Activated CD8-positive, alpha-beta T cell treated with anti-CD3 and anti-CD28 coated beads, Interleukin-2, amount 10 ng/mL, durations not matched to agents 7 days and 5 days (primary cell): ENCODE measurements at regions of chr19 and their contacts with region 1.

Region 1: DNA sequence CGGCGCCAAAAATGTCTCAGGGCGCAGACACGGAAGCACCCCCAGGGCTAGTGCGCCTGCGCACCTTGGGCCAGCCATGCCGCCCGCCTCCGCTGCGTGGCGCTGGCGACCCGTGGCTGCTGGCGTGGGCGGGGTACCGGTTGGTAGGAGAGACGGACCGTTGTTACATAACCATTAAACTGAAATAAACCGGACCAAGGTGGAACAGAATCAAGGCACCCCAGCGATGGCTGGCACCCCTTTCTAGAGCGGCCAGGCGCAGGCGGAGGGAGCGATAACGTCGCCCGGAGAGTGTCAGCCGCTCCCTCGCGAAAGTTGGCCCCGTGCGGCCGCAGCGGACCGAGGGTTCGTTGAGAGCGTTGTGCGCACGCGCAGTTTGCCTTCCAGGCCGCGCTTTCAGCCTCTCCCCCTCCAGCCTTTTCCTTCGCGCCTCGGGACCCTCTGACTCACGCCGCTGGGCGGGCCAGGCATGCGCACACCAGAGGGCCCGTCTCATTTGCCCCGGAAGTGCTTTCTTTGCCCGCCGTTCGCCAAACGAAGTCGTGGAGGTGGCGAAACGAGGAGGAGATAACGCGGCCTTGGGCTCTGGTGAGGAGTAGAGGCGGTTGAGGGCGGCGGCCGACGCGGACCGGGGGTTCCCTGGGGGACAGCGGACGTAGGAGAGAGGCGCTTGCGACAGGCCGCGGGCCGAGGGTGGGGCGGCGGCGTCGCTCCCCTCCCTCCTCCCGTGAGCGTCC is at the starts of genes PLEKHJ1 and SF3A2:
- DNase-seq: peak; percentile 98
- ATAC-seq: peak; percentile 87
- H3K4me3 Mint-ChIP-seq: peak within 1 kb of the TSS; percentile 99
- H3K27ac Mint-ChIP-seq: peak within 1 kb of the TSS; percentile 100
- H3K4me1 Mint-ChIP-seq: peaks cover 61% of the 10 kb centered on the region
- H3K27me3 Mint-ChIP-seq: no peaks in the 10 kb centered on the region
- total RNA-seq, gene PLEKHJ1: 78.0 to 79.9 TPM
- total RNA-seq, gene SF3A2: 157 to 163 TPM

Region 2: GRCh38 chr19:2253106-2254053 is 16.9 kb after region 1 on chr19:
- CTCF ChIA-PET with region 1: interaction called, 22 read pairs
- POLR2A ChIA-PET with region 1: interaction called, 19 read pairs
- DNase-seq: peak; percentile 47
- ATAC-seq: no peak
- H3K4me3 Mint-ChIP-seq: peak overlapping the region; percentile 28
- H3K27ac Mint-ChIP-seq: no peak overlapping the region
- H3K4me1 Mint-ChIP-seq: peaks cover 28% of the 10 kb centered on the region
- H3K27me3 Mint-ChIP-seq: peaks cover 13% of the 10 kb centered on the region

Region 3: DNA sequence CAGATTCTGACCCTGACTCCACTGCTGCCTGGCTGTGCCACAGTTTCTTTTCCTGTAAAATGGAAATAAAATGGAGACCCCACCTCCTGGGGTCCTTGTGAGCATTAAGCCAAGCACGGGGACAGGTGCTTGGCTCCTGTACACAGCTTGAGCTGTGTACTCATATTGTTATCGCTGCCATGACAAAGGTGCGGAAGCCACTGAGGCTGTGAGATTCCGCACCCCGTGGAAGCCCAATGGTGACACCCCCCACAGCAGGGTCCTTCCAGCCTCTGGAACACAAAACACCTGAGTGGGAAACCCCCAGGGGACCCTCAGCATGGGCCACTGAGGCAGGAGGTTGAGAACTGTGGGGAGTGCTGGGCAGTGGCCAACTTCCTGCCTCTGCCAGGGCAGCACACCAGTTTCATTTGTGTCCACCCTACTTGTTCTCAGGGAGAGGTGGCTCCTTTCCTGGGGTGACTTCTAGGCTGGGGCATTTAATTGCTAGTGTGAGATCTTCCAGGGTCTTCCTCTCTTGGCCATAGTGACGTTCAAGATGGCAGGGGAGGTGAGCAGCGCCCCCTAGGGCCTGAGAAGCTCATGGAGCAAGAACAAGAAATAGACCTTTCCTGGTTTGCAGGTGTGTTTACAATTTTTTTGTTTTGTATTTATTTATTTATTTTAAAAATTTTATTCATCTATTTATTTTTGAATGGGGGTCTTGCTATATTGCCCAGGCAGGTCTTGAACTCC is 25.1 kb after region 1 on chr19:
- CTCF ChIA-PET with region 1: interaction called, 32 read pairs
- POLR2A ChIA-PET with region 1: interaction called, 19 read pairs
- DNase-seq: peak; percentile 74
- ATAC-seq: peak; percentile 48
- H3K4me3 Mint-ChIP-seq: no peak overlapping the region
- H3K27ac Mint-ChIP-seq: no peak overlapping the region
- H3K4me1 Mint-ChIP-seq: peaks cover 34% of the 10 kb centered on the region
- H3K27me3 Mint-ChIP-seq: no peaks in the 10 kb centered on the region

Region 4: DNA sequence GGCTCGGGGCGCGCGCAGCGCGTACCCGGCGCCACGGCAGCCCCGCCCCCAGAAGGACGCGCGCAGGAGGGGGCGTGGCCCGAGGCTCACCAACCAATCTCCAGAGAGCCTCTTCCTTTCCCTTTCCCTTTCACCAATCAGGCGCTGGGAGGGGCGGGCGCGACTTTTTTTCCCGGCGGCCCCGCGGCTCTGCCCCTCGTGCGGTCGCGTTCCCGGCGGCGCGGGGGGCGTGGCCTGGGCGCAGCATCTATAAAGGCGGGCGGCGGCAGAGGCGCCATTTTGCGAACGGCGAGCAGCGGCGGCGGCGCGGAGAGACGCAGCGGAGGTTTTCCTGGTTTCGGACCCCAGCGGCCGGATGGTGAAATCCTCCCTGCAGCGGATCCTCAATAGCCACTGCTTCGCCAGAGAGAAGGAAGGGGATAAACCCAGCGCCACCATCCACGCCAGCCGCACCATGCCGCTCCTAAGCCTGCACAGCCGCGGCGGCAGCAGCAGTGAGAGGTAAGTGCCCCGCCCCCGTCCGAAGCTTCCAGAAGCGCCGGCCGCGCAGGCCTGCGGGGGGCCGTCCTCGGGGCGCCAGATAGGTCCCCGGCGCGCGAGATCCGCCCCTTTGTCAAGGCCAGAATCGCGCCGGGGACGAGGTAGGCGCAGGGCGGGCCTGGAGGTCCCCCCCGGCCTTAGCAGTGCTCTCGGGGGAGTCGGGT is 32.9 kb after region 1 on chr19:
- CTCF ChIA-PET with region 1: interaction called, 25 read pairs
- POLR2A ChIA-PET with region 1: interaction called, 30 read pairs
- DNase-seq: peak; percentile 99
- ATAC-seq: peak; percentile 78
- H3K4me3 Mint-ChIP-seq: peak overlapping the region; percentile 88
- H3K27ac Mint-ChIP-seq: peak overlapping the region; percentile 88
- H3K4me1 Mint-ChIP-seq: peaks cover 45% of the 10 kb centered on the region
- H3K27me3 Mint-ChIP-seq: no peaks in the 10 kb centered on the region

Region 5: GRCh38 chr19:2394442-2395292 is 158.2 kb after region 1 on chr19:
- CTCF ChIA-PET with region 1: interaction called, 15 read pairs
- POLR2A ChIA-PET with region 1: no interaction called
- DNase-seq: peak; percentile 58
- ATAC-seq: peak; percentile 80
- H3K4me3 Mint-ChIP-seq: peak overlapping the region; percentile 69
- H3K27ac Mint-ChIP-seq: peak overlapping the region; percentile 72
- H3K4me1 Mint-ChIP-seq: peaks cover 26% of the 10 kb centered on the region
- H3K27me3 Mint-ChIP-seq: peaks cover 6% of the 10 kb centered on the region